Left colon (tissue), 2 donors: ENCODE measurements at regions of chr18 and their contacts with region 1.

Region 1: GRCh38 chr18:11149441-11150270 is at the start of gene PIEZO2:
- DNase-seq: peak in 1 of 2 donors; percentile 18
- ATAC-seq: no peak
- total RNA-seq, gene PIEZO2: 1.3 to 1.4 TPM

Region 2: GRCh38 chr18:10560450-10561045 is 589.1 kb before region 1 on chr18:
- intact Hi-C with region 1: loop called in 1 of 2 experiments (anchors 5 kb)
- DNase-seq: peak; percentile 44 to 80
- ATAC-seq: peak; percentile 79

Region 3: GRCh38 chr18:10851824-10852319 is 297.8 kb before region 1 on chr18:
- intact Hi-C with region 1: loop called (anchors 10 kb)
- DNase-seq: no peak
- ATAC-seq: no peak

Region 4: DNA sequence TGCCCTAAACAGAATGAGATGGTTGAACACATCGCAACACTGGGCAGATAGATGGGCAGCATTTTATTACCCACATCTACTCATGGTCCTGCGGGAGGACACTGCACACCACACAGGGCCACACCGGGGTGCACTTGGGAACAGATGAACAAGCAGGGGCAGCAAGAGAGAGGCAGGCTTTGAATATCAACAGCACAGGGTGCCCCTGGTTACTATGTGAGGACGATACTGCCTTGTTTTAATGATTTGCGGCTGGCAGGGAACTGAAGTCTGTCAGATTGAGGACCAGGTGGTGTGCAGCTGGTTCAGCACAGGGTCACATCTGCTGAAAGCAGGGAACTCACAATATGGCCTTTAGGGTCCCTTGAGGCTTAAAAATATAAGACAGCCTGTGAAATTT is 196.0 kb before region 1 on chr18:
- intact Hi-C with region 1: no loop called
- DNase-seq: no peak
- ATAC-seq: no peak